H1 (cell line): ENCODE measurements at regions of chr1 and their contacts with region 1.

Region 1: DNA sequence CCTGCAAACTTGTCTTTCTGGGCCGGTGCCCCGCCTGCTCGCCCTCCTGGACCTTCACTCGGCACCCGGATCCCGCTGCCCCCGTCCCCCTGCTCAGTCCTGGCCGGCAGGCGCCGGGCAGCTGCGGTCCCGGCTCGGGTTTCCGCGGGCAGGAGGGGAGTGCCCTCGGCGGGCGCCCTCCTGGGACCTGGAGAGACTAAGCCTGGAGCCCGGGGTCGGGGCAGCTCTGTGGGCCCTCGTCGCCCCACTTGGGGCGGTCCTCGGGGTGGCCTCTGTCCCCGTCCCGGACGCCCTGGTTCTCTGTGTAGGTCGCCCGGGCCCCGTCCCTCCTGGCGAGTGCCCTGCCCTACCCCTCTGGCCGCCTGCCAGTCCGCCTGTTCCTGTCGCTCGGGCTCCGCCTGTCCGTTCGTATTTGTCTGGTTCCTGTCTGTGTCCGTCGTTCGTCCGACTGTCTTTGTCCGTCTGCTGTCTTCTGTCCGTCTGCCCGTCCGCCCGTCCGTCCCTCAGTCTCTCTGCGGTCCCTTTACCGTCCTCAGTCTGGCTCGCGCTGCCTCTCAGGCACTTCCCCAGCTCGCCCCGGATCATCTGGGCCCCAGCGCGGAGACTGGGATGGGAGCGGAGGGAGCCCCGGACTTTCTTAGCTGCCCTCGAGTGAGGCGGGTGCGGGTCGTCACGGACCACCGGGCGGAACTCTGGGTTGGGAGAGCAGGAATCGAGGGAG is 552 bp downstream of the SERINC2 start:
- DNase-seq: peak in 1 of 2 experiments; percentile 78
- H3K4me3 ChIP-seq: peak overlapping the region; percentile 73 to 97 (median 86)
- H3K27ac ChIP-seq: peak overlapping the region; percentile 3; the same call in 1 of the 2 replicates
- H3K4me1 ChIP-seq: peaks cover 10 to 27% (median 13%) of the 10 kb centered on the region in 4 experiments
- H3K27me3 ChIP-seq: peaks cover 0 to 6% (median 2%) of the 10 kb centered on the region in 4 experiments; a peak in 3 of 7 replicates
- CTCF ChIP-seq: no peak
- EP300 ChIP-seq: no peak
- POLR2A ChIP-seq: no peak; a peak in 1 of 3 replicates
- RAD21 ChIP-seq: no peak

Region 2: GRCh38 chr1:31372961-31373896 is 40.3 kb before region 1 on chr1 and contains the start of gene FABP3:
- CTCF ChIA-PET with region 1: interaction called, 5 read pairs
- POLR2A ChIA-PET with region 1: interaction called, 26 read pairs
- DNase-seq: peak; percentile 85 to 91
- H3K4me3 ChIP-seq: peak within 1 kb of the TSS; percentile 33 to 65 (median 58)
- H3K27ac ChIP-seq: peak within 1 kb of the TSS; percentile 72; the same call in 1 of the 2 replicates
- H3K4me1 ChIP-seq: peaks cover 8 to 27% (median 24%) of the 10 kb centered on the region in 4 experiments
- H3K27me3 ChIP-seq: 0 out of 7 replicates have a peak, but pooled peaks cover 0 to 2% (median 0%) of the 10 kb centered on the region in 4 experiments
- CTCF ChIP-seq: no peak
- EP300 ChIP-seq: no peak; a peak in 1 of 3 replicates
- POLR2A ChIP-seq: peak; percentile 74 to 96
- RAD21 ChIP-seq: peak in 1 of 2 experiments; percentile 10; a peak in 1 of 4 replicates
- total RNA-seq, gene FABP3: 31.4 and 34.8 TPM in 2 replicates

Region 3: DNA sequence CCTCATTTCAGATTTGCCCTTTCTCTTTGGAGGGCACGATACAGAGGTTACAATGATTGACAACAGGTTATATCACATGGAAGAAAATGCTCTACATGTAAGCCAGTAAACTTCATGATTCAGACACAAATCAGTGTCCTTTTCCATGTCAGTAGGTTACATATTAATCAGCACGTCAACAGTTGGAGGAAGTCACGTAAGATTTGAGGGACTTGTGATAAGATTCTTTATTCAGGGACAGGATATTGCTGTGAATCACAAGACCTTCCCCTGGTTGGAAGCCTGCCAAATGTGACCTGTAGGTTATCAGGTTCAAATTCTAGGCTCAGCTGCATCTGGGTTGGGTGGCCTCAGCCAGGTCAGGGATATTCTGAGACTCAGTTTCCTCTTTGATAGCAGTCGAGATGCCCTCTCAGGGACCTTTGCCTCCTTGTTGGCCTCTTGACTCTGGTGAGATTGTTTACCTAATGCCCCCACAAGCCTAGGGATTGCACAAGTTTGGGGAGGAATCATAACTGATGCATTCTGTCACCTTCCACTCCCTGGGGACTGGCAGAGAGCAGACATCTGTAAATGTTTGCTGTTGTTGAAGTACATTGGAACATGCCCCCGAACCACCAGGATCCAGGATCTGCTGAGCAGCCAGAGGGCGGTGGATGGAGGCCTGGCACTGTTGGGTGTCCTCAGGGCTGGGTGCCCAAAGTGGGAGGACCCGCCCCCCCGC is 31.3 kb after region 1 on chr1:
- CTCF ChIA-PET with region 1: no interaction called
- POLR2A ChIA-PET with region 1: no interaction called
- DNase-seq: no peak
- H3K4me3 ChIP-seq: no peak overlapping the region
- H3K27ac ChIP-seq: no peak overlapping the region
- H3K4me1 ChIP-seq: no peaks in the 10 kb centered on the region
- H3K27me3 ChIP-seq: no peaks in the 10 kb centered on the region
- CTCF ChIP-seq: no peak
- EP300 ChIP-seq: no peak
- POLR2A ChIP-seq: no peak
- RAD21 ChIP-seq: no peak

Region 4: DNA sequence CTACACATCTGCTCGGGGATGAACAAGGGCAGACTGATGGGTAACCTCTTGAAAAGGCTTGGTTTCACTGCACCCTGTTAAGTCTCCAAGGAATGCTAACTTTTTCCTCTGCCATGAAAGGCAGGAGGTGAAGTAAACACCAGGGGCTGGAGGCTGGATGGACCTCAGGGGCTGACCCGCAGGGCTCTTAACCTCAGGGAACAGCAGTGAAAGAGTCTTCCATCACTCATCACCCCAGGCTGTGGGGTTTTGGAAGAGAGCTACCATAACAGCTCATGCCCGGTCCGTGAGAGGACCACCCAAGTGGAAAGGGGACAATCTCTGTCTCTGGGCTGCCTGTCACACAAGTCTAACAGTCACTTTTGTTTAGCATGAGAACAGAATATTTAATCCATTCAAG is 41.4 kb after region 1 on chr1:
- CTCF ChIA-PET with region 1: no interaction called
- POLR2A ChIA-PET with region 1: no interaction called
- DNase-seq: no peak
- H3K4me3 ChIP-seq: no peak overlapping the region
- H3K27ac ChIP-seq: no peak overlapping the region
- H3K4me1 ChIP-seq: peaks cover 0 to 5% (median 0%) of the 10 kb centered on the region in 4 experiments; a peak in 2 of 7 replicates
- H3K27me3 ChIP-seq: no peaks in the 10 kb centered on the region
- CTCF ChIP-seq: no peak
- EP300 ChIP-seq: no peak
- POLR2A ChIP-seq: no peak
- RAD21 ChIP-seq: no peak